ENCODE measurements at regions of chr4 and their contacts with region 1.

Region 1: DNA sequence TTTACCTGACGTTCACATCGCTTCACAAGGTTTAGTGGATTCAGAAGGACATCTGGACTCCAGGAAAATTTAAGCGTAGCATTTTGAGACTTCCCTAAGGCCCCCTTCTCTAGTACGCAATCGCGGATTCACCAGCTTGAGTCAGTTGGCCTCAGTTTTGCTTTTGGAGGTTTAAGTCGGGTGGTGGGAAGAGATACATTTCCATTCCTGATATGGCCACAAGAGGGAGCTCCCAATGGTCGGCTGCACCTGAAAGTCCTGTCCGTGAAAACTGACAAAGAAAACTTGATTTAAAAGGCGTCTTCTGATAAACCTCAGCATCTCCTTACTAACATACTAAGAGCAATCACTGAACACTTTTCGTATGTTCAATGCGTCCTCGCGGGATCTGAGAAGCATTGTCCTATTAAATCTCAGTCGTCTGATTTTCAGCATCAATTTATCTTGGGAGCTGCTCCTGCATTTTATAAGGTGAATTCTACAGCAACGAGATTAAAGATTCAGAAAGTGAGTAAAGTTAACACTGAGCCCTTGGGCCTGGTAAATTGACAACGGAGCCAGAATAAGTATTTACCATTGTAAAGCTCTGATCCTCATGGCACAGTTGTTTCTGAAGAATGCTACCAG is 50.6 kb downstream of the LGI2 start:
- DNase-seq: peak; percentile 68
- ATAC-seq: peak; percentile 47
- H3K4me3 Mint-ChIP-seq: no peak overlapping the region
- H3K27ac Mint-ChIP-seq: no peak overlapping the region
- H3K4me1 Mint-ChIP-seq: peaks cover 9% of the 10 kb centered on the region
- H3K27me3 Mint-ChIP-seq: peaks cover 16% of the 10 kb centered on the region

Region 2: DNA sequence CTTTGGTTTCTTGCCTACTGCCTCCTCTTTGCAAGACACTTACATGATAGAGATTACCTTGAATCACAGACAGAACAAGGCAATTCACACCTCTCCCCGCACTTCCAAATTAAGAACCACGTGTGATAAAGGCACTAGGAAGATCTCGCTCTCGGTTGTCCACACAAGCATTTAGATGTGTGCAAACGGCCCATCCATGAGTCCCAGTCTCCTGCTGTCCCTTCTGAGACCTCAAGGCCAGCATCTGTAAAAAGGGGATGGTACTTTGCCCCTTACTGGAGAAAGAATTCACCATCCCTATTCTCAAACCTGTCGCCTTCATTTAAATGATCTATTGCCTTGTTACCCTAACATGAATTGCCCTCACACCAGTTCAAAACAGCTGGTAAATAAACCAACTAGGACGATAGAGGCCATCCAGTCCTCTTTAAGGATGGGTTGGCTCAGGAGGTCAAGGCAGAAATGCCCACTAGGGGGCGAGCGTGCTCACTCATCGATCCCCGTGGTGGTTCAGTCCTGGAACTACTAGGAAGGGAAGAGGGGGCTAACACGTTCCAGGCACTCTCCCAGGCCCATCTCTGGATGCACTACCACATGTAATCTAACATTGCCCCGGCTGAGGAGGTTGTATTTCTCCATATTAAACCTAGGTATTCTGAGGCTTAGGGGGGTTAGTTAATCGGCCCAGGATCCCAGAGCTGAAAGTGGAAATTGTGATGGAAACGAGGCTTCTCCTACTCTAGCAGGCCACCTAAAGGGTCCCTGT is 491.6 kb before region 1 on chr4:
- CTCF ChIA-PET with region 1: no interaction called
- POLR2A ChIA-PET with region 1: no interaction called
- intact Hi-C with region 1: loop called in 1 of 2 experiments (anchors 5 kb)
- DNase-seq: peak; percentile 86
- ATAC-seq: peak; percentile 80
- H3K4me3 Mint-ChIP-seq: no peak overlapping the region
- H3K27ac Mint-ChIP-seq: no peak overlapping the region
- H3K4me1 Mint-ChIP-seq: no peaks in the 10 kb centered on the region
- H3K27me3 Mint-ChIP-seq: peaks cover 25% of the 10 kb centered on the region

Region 3: DNA sequence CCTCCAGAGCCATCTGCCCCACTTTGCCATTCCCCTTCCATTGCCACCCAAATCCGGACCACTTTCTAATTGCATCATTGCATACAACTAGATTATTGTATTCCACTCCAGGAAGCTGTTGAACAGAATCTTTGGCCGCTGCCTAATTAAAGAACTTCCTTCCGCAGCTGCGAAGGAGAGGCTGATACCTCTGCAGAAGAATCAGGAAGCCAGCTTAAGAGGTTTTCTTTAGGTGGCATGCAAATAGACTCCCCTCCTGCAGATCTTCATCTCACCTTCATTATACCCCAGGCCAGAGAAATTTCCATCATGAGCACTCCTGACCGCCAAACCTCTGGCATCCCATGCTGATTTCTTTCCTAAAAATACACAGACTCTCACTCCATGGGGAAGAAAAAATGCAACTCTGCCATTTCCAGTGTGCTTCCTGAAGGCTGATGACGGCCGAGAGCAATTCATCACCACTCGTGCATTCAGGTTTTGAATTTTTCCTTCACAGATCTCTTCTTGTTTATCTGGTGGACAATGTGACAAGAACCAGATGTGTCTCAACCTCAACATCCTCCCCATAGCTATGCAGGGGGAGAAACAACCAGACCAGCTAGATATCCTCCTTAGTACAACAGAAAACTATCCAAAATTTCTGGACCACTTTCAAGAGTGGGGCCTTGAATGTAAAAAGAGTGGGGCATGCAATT is 19.4 kb after region 1 on chr4:
- CTCF ChIA-PET with region 1: interaction called, 28 read pairs
- POLR2A ChIA-PET with region 1: no interaction called
- intact Hi-C with region 1: no loop called
- DNase-seq: no peak
- ATAC-seq: no peak
- H3K4me3 Mint-ChIP-seq: no peak overlapping the region
- H3K27ac Mint-ChIP-seq: no peak overlapping the region
- H3K4me1 Mint-ChIP-seq: peaks cover 7% of the 10 kb centered on the region
- H3K27me3 Mint-ChIP-seq: peaks cover 2% of the 10 kb centered on the region

Region 4: GRCh38 chr4:25144870-25145481 is 164.8 kb after region 1 on chr4:
- CTCF ChIA-PET with region 1: interaction called, 22 read pairs
- POLR2A ChIA-PET with region 1: no interaction called
- intact Hi-C with region 1: loop called (anchors 1 kb)
- DNase-seq: no peak
- ATAC-seq: no peak
- H3K4me3 Mint-ChIP-seq: no peak overlapping the region
- H3K27ac Mint-ChIP-seq: no peak overlapping the region
- H3K4me1 Mint-ChIP-seq: no peaks in the 10 kb centered on the region
- H3K27me3 Mint-ChIP-seq: no peaks in the 10 kb centered on the region

Region 5: DNA sequence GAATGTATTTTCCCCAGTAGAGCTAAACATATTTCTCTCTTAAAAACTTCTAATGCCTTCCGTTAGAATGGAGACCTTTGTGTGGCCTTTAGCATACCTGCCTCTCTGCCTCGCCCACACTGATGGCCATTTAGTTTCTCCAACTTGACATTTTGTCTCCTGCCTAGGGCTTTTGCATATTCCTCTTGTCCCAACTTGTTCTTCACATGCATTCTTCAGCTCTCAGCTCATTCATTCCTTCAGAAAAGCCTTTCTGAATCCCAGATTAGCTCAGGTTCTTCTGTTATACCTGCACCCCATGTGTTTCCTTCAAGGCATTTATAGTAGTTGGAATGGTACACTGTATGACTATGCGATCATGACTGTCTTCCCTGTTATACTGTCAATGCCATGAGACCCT is 415.7 kb after region 1 on chr4:
- CTCF ChIA-PET with region 1: no interaction called
- POLR2A ChIA-PET with region 1: no interaction called
- intact Hi-C with region 1: no loop called
- DNase-seq: no peak
- ATAC-seq: no peak
- H3K4me3 Mint-ChIP-seq: no peak overlapping the region
- H3K27ac Mint-ChIP-seq: no peak overlapping the region
- H3K4me1 Mint-ChIP-seq: no peaks in the 10 kb centered on the region
- H3K27me3 Mint-ChIP-seq: no peaks in the 10 kb centered on the region

Region 6: DNA sequence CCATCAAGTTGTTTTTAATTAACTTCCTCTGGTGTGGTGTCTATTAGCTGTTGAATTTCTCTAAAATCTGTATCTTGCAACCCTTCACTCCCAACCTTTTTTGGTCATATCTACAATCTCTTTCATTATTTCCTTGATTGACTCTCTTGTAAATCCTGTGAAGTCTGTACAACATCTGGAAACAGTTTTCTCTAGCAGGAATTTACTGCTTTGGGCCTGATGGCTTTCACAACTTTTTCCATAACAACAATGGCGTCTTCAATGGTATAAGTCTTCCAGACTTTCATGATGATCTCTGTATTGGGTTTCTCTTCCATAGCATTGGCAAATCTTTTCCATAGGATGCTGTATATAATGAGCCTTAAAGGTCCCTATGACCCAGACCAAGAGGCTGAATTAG is 1652.7 kb after region 1 on chr4:
- CTCF ChIA-PET with region 1: no interaction called
- POLR2A ChIA-PET with region 1: no interaction called
- intact Hi-C with region 1: no loop called
- DNase-seq: no peak
- ATAC-seq: no peak
- H3K4me3 Mint-ChIP-seq: no peak overlapping the region
- H3K27ac Mint-ChIP-seq: no peak overlapping the region
- H3K4me1 Mint-ChIP-seq: no peaks in the 10 kb centered on the region
- H3K27me3 Mint-ChIP-seq: no peaks in the 10 kb centered on the region

Measured in activated CD4-positive, alpha-beta T cell treated with anti-CD3 and anti-CD28 coated beads for 36 hours (primary cell).